ENCODE measurements at regions of chr2 and their contacts with region 1.

Region 1: GRCh38 chr2:26330113-26330549 is 15.8 kb upstream of the SELENOI start:
- DNase-seq: peak; percentile 73 to 88 (median 78)
- ATAC-seq: peak; percentile 99
- H3K4me3 ChIP-seq: no peak overlapping the region
- H3K27ac ChIP-seq: no peak overlapping the region
- H3K4me1 ChIP-seq: peaks cover 0 to 6% of the 10 kb centered on the region in 2 experiments; a peak in 2 of 5 replicates
- H3K27me3 ChIP-seq: no peaks in the 10 kb centered on the region
- CTCF ChIP-seq: peak; percentile 80 to 95 (median 93)
- EP300 ChIP-seq: no peak
- POLR2A ChIP-seq: no peak
- RAD21 ChIP-seq: peak; percentile 82 to 87

Region 2: GRCh38 chr2:26172871-26173775 is 157.0 kb before region 1 on chr2 and contains the start of gene GAREM2:
- CTCF ChIA-PET with region 1: no interaction called
- POLR2A ChIA-PET with region 1: no interaction called
- in situ Hi-C with region 1: no loop called
- intact Hi-C with region 1: loop called (anchors 1 kb)
- DNase-seq: peak in 3 of 4 experiments; percentile 73 to 90 (median 89)
- ATAC-seq: peak; percentile 39
- H3K4me3 ChIP-seq: peak within 1 kb of the TSS; percentile 47
- H3K27ac ChIP-seq: no peak within 1 kb of the TSS
- H3K4me1 ChIP-seq: peaks cover 0 to 43% of the 10 kb centered on the region in 2 experiments; a peak in 2 of 5 replicates
- H3K27me3 ChIP-seq: no peaks in the 10 kb centered on the region
- CTCF ChIP-seq: no peak
- EP300 ChIP-seq: no peak
- POLR2A ChIP-seq: no peak
- RAD21 ChIP-seq: no peak
- polyA plus RNA-seq, gene GAREM2: 1.7 to 2.2 TPM

Region 3: GRCh38 chr2:26244309-26245121 is 85.6 kb before region 1 on chr2 and contains the starts of genes HADHA and HADHB:
- CTCF ChIA-PET with region 1: no interaction called
- POLR2A ChIA-PET with region 1: interaction called, 3 read pairs
- in situ Hi-C with region 1: no loop called
- intact Hi-C with region 1: loop called (anchors 2 kb)
- DNase-seq: peak; percentile 90 to 93 (median 91)
- ATAC-seq: peak; percentile 85
- H3K4me3 ChIP-seq: peak within 1 kb of the TSS; percentile 82
- H3K27ac ChIP-seq: peak within 1 kb of the TSS; percentile 95
- H3K4me1 ChIP-seq: peaks cover 9 to 16% of the 10 kb centered on the region in 2 experiments; a peak in 3 of 5 replicates
- H3K27me3 ChIP-seq: no peaks in the 10 kb centered on the region
- CTCF ChIP-seq: peak; percentile 13 to 18 (median 14); a peak in 2 of 6 replicates
- EP300 ChIP-seq: peak; percentile 47
- POLR2A ChIP-seq: peak; percentile 91
- RAD21 ChIP-seq: 0 out of 4 replicates have a peak, but pooled peaks of 1 of the 2 experiments have one; percentile 4
- polyA plus RNA-seq, gene HADHA: 152 to 326 TPM
- polyA plus RNA-seq, gene HADHB: 198 to 199 TPM

Region 4: DNA sequence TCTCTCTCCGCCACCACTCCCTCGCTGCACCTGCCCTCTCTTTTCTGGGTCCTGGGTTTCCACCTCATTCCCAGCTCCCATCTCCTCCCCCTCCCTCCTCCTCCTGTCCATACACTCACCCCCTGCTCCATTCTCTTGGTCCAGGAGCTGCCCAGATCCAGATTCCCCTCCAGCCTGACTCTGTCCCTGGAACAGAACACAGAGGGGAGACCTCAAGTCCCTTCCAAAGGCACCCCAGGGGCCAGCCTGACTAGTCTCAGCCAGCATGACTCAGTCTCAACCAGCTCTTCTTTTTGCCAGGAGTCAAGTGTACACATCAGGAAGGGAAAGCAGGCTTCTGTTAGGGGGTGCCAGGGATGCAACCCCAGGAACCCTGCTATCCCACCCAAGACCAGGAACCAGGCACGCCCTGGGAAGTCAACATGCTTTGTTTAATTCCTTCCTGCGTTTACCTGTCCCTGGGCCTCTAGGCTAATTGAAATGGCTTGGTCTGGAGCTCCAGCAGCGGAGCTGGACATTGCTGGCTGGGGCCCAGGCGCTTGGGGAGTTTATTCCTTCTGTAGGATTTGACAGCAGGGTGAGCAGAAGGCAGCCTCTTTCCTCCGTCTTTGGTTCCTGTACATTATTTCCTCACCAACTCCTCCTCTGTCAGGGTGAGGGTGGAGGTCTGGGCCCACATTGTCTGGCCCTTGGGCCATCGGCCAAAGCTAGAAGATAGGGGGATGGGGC is 12.6 kb before region 1 on chr2:
- CTCF ChIA-PET with region 1: no interaction called
- POLR2A ChIA-PET with region 1: interaction called, 10 read pairs
- in situ Hi-C with region 1: no loop called
- intact Hi-C with region 1: no loop called
- DNase-seq: peak in 1 of 4 experiments; percentile 27
- ATAC-seq: peak; percentile 23
- H3K4me3 ChIP-seq: no peak overlapping the region
- H3K27ac ChIP-seq: no peak overlapping the region; the same call in 2 of the 3 replicates
- H3K4me1 ChIP-seq: peaks cover 15 to 31% of the 10 kb centered on the region in 2 experiments
- H3K27me3 ChIP-seq: peaks cover 0 to 10% of the 10 kb centered on the region in 2 experiments; a peak in 2 of 5 replicates
- CTCF ChIP-seq: no peak
- EP300 ChIP-seq: no peak
- POLR2A ChIP-seq: no peak
- RAD21 ChIP-seq: no peak

Measured in K562 (cell line).